ENCODE measurements at regions of chr10 and their contacts with region 1.

Region 1: GRCh38 chr10:24518981-24519597 is 204.6 kb downstream of the ARHGAP21 start:
- DNase-seq: no peak
- ATAC-seq: peak; percentile 81

Region 2: GRCh38 chr10:24197263-24197662 is 321.8 kb before region 1 on chr10:
- intact Hi-C with region 1: loop called (anchors 10 kb)
- DNase-seq: no peak
- ATAC-seq: no peak

Region 3: DNA sequence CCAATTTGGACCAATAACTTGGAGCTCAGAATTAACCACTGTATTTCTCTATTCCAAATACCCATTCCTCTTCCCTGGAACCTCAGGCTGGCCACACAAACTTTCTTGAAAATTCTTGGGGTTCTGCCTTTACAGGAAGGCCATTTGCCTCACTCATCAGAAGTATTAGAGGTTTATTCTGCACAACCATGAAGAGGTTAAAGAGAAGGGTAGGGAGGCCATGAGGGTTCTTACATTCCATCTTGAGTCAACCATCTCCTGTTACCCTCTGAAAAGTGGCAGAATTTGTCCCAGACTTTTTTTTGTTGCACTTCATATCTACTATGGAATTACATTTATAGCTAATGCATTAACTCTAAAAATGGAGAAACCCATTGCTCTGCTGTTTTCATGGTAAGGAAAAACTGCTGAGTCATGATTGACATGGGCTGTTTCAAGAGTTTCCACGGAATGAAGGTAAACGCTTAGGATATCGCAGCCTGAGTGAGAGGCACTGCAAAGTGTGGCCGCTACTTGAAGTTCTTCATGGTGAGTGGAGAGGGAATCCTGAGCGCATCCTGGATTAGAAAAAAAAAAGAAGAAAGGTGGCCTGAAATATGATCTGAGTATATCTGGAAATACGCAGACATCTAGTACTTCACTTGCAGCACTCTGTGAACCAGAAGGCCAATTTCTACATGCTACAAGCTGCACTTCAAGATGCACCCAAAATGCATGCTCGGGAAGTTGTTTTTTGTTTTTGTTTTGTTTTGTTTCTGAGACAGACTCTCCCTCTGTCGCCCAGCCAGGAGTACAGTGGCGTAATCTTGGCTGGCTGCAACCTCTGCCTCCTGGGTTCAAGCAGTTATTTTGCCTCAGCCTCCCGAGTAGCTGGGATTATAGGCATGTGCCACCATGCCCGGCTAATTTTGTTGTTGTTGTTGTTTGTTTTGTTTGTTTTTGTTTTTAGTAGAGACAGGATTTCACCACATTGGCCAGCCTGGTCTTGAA is 226.5 kb before region 1 on chr10:
- intact Hi-C with region 1: no loop called
- DNase-seq: no peak
- ATAC-seq: peak; percentile 21

Region 4: DNA sequence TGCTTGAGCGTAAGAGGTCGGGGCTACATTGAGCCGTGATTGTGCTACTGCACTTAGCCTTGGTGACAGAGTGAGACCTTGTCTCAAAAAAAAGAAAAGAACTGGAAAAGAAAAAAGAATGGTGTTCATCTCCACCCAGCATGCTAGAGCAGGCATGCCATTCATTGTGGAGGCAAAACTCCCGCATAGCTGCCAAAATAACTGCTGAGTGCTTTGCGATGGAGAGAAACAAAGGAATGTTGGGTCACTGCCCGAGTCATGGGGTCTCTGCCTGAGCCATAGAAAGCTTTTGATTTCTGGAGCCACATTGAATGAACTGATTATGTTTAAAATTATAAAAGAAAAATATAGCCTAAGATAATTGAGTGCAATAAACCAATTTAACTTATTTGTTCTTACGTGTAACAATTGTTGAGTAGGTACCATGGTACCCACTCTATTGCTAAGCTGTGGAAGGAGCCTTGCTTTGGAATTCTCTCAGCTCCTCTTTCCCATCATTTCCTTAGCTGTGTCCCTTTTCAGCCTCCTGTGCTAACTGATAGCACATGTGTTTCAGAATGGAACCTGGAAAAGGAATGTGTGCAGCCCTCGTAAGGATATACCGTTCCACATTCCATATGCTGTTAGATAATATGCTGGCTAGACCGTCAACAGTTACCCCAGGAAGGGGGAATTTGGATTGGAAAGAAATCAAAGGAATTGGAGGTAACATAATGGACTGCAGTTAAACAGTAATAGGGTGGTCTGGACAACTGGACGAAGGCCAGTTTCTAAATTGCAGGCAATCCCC is 211.2 kb before region 1 on chr10:
- intact Hi-C with region 1: no loop called
- DNase-seq: peak; percentile 48
- ATAC-seq: peak; percentile 78